ENCODE measurements at regions of chr17 and their contacts with region 1.

Region 1: GRCh38 chr17:44981221-44981968 is 13.3 kb upstream of the C1QL1 start:
- DNase-seq: peak; percentile 84 to 88
- ATAC-seq: peak; percentile 77 to 78
- H3K4me3 ChIP-seq: peak overlapping the region; percentile 32
- H3K27ac ChIP-seq: peak overlapping the region; percentile 82 to 87
- H3K4me1 ChIP-seq: peaks cover 40% of the 10 kb centered on the region
- CTCF ChIP-seq: no peak
- EP300 ChIP-seq: peak; percentile 33 to 44; a peak in 1 of 5 replicates
- POLR2A ChIP-seq: no peak
- RAD21 ChIP-seq: no peak; a peak in 1 of 5 replicates

Region 2: DNA sequence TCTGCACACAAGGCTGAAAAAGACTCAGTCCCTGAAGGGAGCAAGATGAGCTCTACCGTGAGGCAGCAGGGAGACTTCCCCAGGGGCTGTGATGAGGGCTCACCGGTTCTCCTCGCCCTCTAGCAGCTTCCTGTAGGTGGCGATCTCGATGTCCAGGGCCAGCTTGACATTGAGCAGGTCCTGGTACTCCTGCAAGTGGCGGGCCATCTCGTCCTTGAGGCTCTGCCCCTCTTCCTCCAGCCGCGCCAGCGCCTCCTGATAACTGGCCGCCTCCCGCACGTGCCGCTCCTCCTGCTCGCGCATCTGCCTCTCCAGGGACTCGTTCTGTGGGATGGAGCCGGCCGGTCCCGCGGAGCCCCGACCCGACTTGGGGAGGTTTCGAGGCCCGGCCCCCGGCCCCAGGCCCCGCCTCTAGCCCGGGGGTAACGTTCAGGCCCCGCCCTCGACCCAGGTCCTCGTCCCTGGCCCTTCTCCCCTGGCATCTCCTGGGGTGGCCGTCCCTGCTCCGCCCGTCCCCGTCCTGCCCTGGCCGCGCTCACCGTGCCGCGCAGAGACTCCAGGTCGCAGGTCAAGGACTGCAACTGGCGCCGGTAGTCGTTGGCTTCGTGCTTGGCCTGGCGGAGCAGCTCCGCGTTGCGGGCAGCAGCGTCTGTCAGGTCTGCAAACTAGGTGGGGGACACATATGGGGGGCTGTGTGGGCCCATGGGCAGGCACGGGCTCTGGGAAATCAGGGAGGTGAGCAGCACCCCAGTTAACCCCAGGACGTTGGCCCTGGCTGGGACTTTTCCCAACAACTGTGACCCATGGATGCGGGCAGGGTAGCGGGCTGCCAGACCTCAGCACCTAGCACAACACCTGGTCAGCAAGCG is 70.0 kb before region 1 on chr17:
- CTCF ChIA-PET with region 1: interaction called, 1,853 read pairs
- POLR2A ChIA-PET with region 1: no interaction called
- DNase-seq: peak; percentile 87 to 95
- ATAC-seq: peak; percentile 64 to 92
- H3K4me3 ChIP-seq: no peak overlapping the region
- H3K27ac ChIP-seq: peak overlapping the region; percentile 36 to 91; a peak in 4 of 6 replicates
- H3K4me1 ChIP-seq: peaks cover 46% of the 10 kb centered on the region
- CTCF ChIP-seq: peak; percentile 66
- EP300 ChIP-seq: no peak
- POLR2A ChIP-seq: no peak
- RAD21 ChIP-seq: peak; percentile 43 to 55

Region 3: GRCh38 chr17:44968226-44969143 is 12.9 kb before region 1 on chr17 and contains the start of gene C1QL1:
- CTCF ChIA-PET with region 1: interaction called, 12 read pairs
- POLR2A ChIA-PET with region 1: interaction called, 15 read pairs
- DNase-seq: peak; percentile 90 to 96
- ATAC-seq: peak; percentile 76 to 91
- H3K4me3 ChIP-seq: peak within 1 kb of the TSS; percentile 59
- H3K27ac ChIP-seq: peak within 1 kb of the TSS; percentile 65 to 82
- H3K4me1 ChIP-seq: peaks cover 35% of the 10 kb centered on the region
- CTCF ChIP-seq: no peak
- EP300 ChIP-seq: no peak
- POLR2A ChIP-seq: peak; percentile 31; the same call in 1 of the 2 replicates
- RAD21 ChIP-seq: no peak
- polyA plus RNA-seq, gene C1QL1: 1.9 and 2.6 TPM in 2 replicates

Region 4: GRCh38 chr17:44997733-44998520 is 16.5 kb after region 1 on chr17:
- CTCF ChIA-PET with region 1: interaction called, 30 read pairs
- POLR2A ChIA-PET with region 1: interaction called, 3 read pairs
- DNase-seq: no peak
- ATAC-seq: peak in 1 of 2 experiments; percentile 39; a peak in 3 of 6 replicates
- H3K4me3 ChIP-seq: no peak overlapping the region
- H3K27ac ChIP-seq: no peak overlapping the region
- H3K4me1 ChIP-seq: no peaks in the 10 kb centered on the region
- CTCF ChIP-seq: no peak
- EP300 ChIP-seq: no peak
- POLR2A ChIP-seq: no peak
- RAD21 ChIP-seq: no peak

Region 5: GRCh38 chr17:45038728-45039634 is 57.6 kb after region 1 on chr17:
- CTCF ChIA-PET with region 1: interaction called, 12 read pairs
- POLR2A ChIA-PET with region 1: no interaction called
- DNase-seq: no peak
- ATAC-seq: no peak
- H3K4me3 ChIP-seq: no peak overlapping the region
- H3K27ac ChIP-seq: 0 out of 6 replicates have a peak overlapping the region, but pooled peaks of 1 of the 2 experiments have one; percentile 0
- H3K4me1 ChIP-seq: peaks cover 12% of the 10 kb centered on the region; the same call in 1 of the 3 replicates
- CTCF ChIP-seq: no peak
- EP300 ChIP-seq: no peak
- POLR2A ChIP-seq: no peak
- RAD21 ChIP-seq: no peak

Region 6: DNA sequence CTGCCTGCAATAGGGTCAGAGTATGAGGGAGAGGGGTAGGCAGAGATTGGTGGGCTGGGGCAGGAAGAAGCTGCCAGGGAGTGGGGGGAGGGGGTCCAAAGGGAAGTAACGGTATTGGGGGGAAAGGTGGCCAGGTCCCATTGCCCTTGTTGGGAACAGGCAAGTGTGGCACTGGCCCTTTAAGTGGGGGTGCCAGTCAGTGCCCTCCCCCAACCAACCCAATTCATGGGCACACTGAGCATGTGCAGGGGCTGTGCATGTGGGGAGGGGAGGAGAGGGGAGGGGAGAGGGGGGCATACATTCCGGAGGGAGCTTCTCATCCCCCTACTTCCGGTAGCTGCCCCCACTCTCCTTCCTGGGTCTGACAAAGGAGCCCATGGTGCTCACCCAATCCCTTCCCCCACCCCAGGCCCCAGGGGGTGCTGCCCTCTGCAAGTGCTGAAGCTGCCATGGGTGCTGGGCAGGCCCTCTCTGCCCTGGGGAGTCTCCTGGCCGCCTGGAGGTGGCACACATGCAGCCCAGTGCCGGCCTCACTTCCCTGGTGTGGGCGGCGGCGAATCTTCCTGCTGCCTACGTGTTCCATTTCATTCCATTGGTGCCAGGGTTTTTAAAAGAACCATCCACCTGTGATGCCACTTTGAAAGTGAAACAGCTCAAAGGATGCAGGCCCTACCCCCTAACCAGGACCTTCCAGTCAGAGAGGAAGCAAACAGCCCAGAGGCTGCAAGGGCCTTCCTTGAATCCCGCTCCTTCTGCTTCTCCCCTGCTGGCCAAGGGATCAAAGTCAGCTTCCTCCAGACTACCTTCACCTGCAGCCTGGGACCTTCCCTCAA is 191.3 kb after region 1 on chr17:
- CTCF ChIA-PET with region 1: no interaction called
- POLR2A ChIA-PET with region 1: no interaction called
- DNase-seq: peak; percentile 90 to 99
- ATAC-seq: peak; percentile 73 to 79
- H3K4me3 ChIP-seq: peak overlapping the region; percentile 36
- H3K27ac ChIP-seq: peak overlapping the region; percentile 96 to 100
- H3K4me1 ChIP-seq: peaks cover 79% of the 10 kb centered on the region
- CTCF ChIP-seq: 0 out of 3 replicates have a peak, but pooled peaks have one; percentile 24
- EP300 ChIP-seq: peak; percentile 86 to 95
- POLR2A ChIP-seq: peak; percentile 46
- RAD21 ChIP-seq: peak; percentile 36 to 75

Measured in A549 (cell line).